Natural killer cell (primary cell): ENCODE measurements at regions of chr14 and their contacts with region 1.

Region 1: GRCh38 chr14:31420319-31421111 is at the start of gene HEATR5A:
- DNase-seq: peak; percentile 91 to 95
- ATAC-seq: peak; percentile 98 to 99 (median 99)
- H3K4me3 ChIP-seq: peak within 1 kb of the TSS; percentile 98
- H3K4me3 Mint-ChIP-seq: peak within 1 kb of the TSS; percentile 100
- H3K27ac ChIP-seq: peak within 1 kb of the TSS; percentile 69
- H3K27ac Mint-ChIP-seq: peak within 1 kb of the TSS; percentile 90 to 96
- H3K4me1 ChIP-seq: peaks cover 6% of the 10 kb centered on the region
- H3K4me1 Mint-ChIP-seq: peaks cover 22 to 23% of the 10 kb centered on the region in 2 donors
- H3K27me3 ChIP-seq: no peaks in the 10 kb centered on the region
- H3K27me3 Mint-ChIP-seq: no peaks in the 10 kb centered on the region
- CTCF ChIP-seq: no peak
- total RNA-seq, gene HEATR5A: 12.1 to 23.9 (median 15.1) TPM

Region 2: DNA sequence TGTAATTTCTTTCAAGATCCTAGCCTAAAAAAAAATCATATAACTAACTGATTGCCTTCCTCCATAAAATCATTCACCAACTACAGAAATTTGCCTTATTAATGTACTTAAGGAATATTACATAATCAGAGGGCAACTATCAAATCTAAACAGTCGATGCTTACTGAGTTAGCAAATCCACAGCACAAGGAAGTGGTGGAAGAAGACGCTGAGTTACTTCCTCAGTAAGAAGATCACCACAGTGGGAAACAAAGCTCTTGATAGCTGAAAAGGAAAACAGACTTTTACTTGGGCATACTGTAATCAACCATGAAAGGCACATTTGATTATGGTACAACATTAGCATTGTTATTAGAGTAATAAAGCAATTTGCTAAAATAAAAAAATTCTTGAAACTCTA is 48.9 kb before region 1 on chr14:
- intact Hi-C with region 1: loop called (anchors 2 kb)
- DNase-seq: peak in 1 of 2 donors; percentile 4
- ATAC-seq: peak in 1 of 3 donors; percentile 64
- H3K4me3 ChIP-seq: no peak overlapping the region
- H3K4me3 Mint-ChIP-seq: no peak overlapping the region
- H3K27ac ChIP-seq: no peak overlapping the region
- H3K27ac Mint-ChIP-seq: peak overlapping the region in 1 of 2 donors; percentile 18
- H3K4me1 ChIP-seq: no peaks in the 10 kb centered on the region
- H3K4me1 Mint-ChIP-seq: peaks cover 0 to 6% of the 10 kb centered on the region in 2 donors
- H3K27me3 ChIP-seq: no peaks in the 10 kb centered on the region
- H3K27me3 Mint-ChIP-seq: no peaks in the 10 kb centered on the region
- CTCF ChIP-seq: no peak

Region 3: GRCh38 chr14:31456841-31457664 is 36.5 kb after region 1 on chr14 and contains the start of gene DTD2:
- intact Hi-C with region 1: loop called (anchors 1 kb)
- DNase-seq: peak; percentile 87 to 96
- ATAC-seq: peak; percentile 97 to 100 (median 98)
- H3K4me3 ChIP-seq: peak within 1 kb of the TSS; percentile 99
- H3K4me3 Mint-ChIP-seq: peak within 1 kb of the TSS; percentile 94
- H3K27ac ChIP-seq: peak within 1 kb of the TSS; percentile 86
- H3K27ac Mint-ChIP-seq: peak within 1 kb of the TSS; percentile 87 to 91
- H3K4me1 ChIP-seq: peaks cover 10% of the 10 kb centered on the region
- H3K4me1 Mint-ChIP-seq: peaks cover 29 to 32% of the 10 kb centered on the region in 2 donors
- H3K27me3 ChIP-seq: peaks cover 4% of the 10 kb centered on the region
- H3K27me3 Mint-ChIP-seq: peaks cover 7 to 11% of the 10 kb centered on the region in 2 donors
- CTCF ChIP-seq: no peak
- total RNA-seq, gene DTD2: 6.6 to 11.9 (median 7.4) TPM